Left cardiac atrium (tissue), 4 donors: ENCODE measurements at regions of chr6 and their contacts with region 1.

Region 1: GRCh38 chr6:3281631-3282475 is 23.1 kb downstream of the PSMG4 start:
- DNase-seq: no peak
- ATAC-seq: peak; percentile 32 to 81

Region 2: GRCh38 chr6:4008324-4009047 is 726.6 kb after region 1 on chr6:
- intact Hi-C with region 1: loop called in 1 of 2 experiments (anchors 10 kb)
- DNase-seq: no peak
- ATAC-seq: peak; percentile 70 to 84